ENCODE measurements at regions of chr11 and their contacts with region 1.

Region 1: GRCh38 chr11:42770444-42771065 is 541.2 kb upstream of the API5 start:
- DNase-seq: peak in 4 of 10 donors; percentile 13 to 52 (median 45)

Region 2: GRCh38 chr11:43119275-43119960 is 348.9 kb after region 1 on chr11:
- intact Hi-C with region 1: no loop called
- DNase-seq: no peak

Region 3: DNA sequence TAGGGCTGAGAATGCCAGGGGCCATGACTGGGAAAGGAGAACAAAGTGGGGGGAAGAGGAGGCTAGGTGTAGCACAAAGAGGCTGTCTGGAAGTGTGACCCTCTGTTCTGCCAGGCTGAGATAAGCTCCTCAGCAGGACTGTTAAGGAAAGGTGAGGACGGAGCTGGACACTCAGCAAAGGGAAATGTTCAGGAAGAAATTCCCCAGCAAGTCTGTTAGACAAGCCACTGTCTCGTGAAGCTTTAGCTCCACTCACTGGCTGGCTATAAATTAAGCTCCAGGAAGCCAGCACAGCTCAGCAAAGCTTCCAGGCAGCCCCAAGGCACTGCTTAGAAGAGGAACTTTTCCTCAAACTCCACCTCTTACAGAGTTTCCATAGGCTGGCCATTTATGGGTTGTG is 360.1 kb after region 1 on chr11:
- intact Hi-C with region 1: loop called (anchors 2 kb)
- DNase-seq: peak; percentile 15 to 90 (median 36)

Region 4: DNA sequence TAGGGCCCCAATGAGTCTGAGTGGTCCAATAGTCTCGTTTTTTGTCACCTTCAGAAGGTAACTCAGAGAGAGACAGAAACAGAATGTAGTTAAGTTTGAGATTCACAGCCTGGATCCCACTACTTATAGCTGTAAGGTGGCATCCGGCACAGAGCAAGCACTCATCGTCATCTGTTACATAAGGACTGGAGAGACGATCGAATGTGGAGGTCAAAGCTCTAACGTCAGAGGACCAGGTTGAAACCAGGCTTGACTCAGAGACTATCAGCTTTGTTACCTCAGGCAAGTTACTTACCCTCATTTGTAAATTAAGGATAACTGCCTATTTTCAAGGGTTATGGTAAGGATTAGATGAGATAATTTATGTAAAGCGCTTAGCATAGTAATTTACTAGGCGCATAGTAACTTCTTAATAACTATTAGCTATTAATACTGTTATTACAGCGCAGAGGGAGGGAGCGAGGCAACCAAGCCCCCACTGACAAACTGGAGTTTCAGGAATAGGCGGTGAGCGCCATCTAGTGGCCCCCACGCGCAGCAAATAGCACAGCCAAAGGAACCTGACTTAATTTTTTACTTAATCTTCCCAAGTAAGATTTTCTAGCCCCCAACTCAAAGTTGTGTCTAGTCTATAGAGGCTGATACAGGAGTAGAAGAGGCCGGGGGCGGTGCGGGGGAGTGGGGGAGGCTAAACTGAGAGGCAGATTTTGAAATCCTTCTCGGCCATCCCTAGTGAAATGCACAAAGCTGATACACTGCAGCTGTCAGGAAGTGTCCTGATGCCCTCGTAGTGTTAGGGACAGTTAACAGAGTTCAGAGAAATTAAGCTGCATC is 512.3 kb after region 1 on chr11:
- intact Hi-C with region 1: loop called (anchors 2 kb)
- DNase-seq: peak; percentile 26 to 95 (median 56)